ENCODE measurements at regions of chr10 and their contacts with region 1.

Region 1: DNA sequence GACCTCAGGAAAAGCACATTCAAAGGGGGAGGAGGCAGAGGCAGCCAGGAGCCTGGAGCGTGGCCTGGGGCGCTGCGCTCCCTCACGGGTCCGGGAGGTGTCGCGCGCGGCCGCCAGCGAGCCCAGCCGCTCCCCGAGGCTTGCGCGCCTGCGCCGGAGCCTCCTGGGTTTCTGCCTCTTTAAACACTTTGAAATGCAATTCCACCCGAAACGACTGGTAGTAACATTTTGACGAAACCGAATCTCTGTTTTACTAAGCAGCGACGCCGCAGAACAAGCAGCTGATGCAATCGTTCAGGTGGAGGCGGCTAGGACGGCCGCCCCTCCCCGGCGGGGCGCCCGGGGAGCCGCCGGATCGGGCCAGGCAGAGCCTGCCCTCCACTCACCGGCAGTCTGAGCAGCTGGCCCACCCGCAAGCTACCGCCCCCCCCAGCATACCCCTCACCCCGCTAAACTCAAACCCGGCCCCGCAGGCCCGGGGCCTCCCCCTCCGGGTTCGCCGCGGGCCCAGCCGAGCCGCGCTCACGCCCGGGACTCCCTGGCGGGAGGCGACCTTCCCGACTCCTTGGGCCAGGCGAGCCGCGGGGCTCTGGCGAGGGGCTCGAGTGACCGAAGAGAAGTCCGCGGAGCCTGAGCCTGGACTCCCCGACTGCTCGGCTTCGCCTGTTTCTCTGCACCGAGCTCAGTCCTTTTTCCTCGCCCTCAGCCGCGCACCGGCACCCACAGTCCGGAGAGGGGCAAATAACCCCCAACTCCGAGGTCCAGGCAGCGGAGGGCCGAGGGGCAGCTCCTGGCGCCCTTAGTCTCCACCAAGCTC is 3.2 kb downstream of the MKX start:
- DNase-seq: peak; percentile 85
- H3K4me3 Mint-ChIP-seq: peak overlapping the region; percentile 65
- H3K27ac Mint-ChIP-seq: no peak overlapping the region
- H3K4me1 Mint-ChIP-seq: peaks cover 40% of the 10 kb centered on the region
- H3K27me3 Mint-ChIP-seq: peaks cover 72% of the 10 kb centered on the region

Region 2: GRCh38 chr10:27713927-27714326 is 28.5 kb before region 1 on chr10:
- CTCF ChIA-PET with region 1: no interaction called
- POLR2A ChIA-PET with region 1: no interaction called
- DNase-seq: no peak
- H3K4me3 Mint-ChIP-seq: no peak overlapping the region
- H3K27ac Mint-ChIP-seq: no peak overlapping the region
- H3K4me1 Mint-ChIP-seq: no peaks in the 10 kb centered on the region
- H3K27me3 Mint-ChIP-seq: peaks cover 3% of the 10 kb centered on the region

Region 3: GRCh38 chr10:28179006-28179742 is 436.8 kb after region 1 on chr10:
- CTCF ChIA-PET with region 1: interaction called, 27 read pairs
- POLR2A ChIA-PET with region 1: interaction called, 6 read pairs
- DNase-seq: peak; percentile 32
- H3K4me3 Mint-ChIP-seq: peak overlapping the region; percentile 77
- H3K27ac Mint-ChIP-seq: peak overlapping the region; percentile 83
- H3K4me1 Mint-ChIP-seq: peaks cover 25% of the 10 kb centered on the region
- H3K27me3 Mint-ChIP-seq: no peaks in the 10 kb centered on the region

Region 4: DNA sequence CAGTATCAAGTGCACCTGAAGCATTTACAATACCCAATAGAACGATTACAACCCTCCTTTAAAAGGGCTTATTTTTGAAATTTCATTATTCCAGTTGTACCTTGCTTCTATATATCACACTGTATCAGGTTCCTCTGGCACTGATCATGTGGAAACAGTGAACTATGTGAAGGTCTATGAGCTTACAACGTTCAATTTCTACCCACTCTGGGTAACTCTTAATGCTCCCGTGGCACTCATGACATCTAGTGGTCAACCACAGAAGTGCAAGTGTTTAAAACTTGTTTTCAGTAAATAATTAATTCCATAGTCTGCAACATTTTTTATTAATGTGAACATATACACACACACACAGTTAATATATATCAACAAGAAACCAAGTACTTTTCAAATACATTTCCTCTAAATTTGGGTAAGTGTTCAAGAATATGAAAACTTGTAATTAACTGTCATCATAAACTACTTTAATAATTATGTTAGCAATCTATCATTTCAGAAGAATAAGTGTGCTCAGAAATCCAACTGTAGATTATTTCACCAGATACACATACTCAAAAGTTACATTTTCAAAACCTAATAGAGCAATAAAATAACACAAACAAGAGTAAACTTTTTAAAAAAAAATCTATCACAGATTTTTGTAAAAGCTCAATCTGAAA is 499.5 kb after region 1 on chr10:
- CTCF ChIA-PET with region 1: interaction called, 13 read pairs
- POLR2A ChIA-PET with region 1: interaction called, 4 read pairs
- DNase-seq: peak; percentile 34
- H3K4me3 Mint-ChIP-seq: no peak overlapping the region
- H3K27ac Mint-ChIP-seq: no peak overlapping the region
- H3K4me1 Mint-ChIP-seq: no peaks in the 10 kb centered on the region
- H3K27me3 Mint-ChIP-seq: no peaks in the 10 kb centered on the region